Astrocyte of the cerebellum (primary cell): ENCODE measurements at regions of chr4 and their contacts with region 1.

Region 1: DNA sequence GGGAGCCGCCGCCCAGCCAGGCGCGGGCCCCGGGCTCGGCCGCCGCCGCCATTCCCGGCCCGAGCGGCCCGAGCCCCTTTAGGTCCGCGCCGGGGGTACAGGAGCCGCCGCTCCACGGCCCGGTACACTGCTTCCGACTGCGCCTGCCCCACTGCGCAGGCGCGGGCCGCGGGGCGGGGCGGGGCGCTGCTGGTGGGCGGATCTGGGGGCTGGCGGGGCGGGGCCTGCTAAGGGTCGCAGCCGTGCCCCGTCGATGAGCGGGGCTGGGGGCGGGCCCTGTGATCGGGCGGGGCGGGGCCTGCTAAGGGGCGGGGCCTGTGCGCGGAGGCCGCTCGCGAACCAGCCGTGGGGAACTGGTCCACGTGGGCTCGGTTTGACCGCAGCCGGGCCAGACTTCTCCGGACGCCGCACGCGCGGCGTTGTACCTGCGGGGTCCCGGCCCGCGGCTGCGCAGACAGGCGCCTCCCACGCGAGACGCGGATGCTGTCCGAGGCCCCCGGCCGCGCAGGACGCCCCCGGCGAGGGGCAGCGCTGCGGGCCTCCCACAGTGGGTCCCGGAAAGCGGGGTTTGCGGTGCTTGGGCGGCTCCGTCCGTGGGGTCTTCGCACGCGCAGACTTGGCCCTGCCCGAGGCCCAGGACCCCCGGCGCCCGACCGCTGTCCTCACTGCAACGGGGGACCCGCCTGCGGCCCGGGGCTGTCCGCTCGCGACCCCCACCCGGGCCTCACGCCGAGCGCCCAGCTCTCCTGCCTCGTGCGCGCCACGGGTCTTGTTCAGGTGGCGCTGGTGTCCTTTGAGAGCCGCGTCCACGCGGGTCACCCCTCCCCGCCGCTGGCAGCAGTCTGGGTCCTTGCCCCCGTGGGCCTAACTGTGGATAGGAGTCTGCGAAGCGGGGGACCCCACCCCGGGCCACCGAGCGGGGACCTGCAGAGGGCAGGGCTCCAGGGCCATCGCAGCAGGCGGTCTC is at the start of gene DGKQ:
- DNase-seq: peak; percentile 24
- H3K4me3 ChIP-seq: peak within 1 kb of the TSS; percentile 67
- CTCF ChIP-seq: no peak

Region 2: GRCh38 chr4:915595-915994 is 58.1 kb before region 1 on chr4:
- in situ Hi-C with region 1: no loop called
- DNase-seq: no peak
- H3K4me3 ChIP-seq: no peak overlapping the region
- CTCF ChIP-seq: no peak

Region 3: GRCh38 chr4:931960-932712 is 41.6 kb before region 1 on chr4 and contains the starts of genes GAK and TMEM175:
- in situ Hi-C with region 1: loop called (anchors 5 kb)
- DNase-seq: peak; percentile 83
- H3K4me3 ChIP-seq: peak within 1 kb of the TSS; percentile 99
- CTCF ChIP-seq: peak; percentile 10

Region 4: DNA sequence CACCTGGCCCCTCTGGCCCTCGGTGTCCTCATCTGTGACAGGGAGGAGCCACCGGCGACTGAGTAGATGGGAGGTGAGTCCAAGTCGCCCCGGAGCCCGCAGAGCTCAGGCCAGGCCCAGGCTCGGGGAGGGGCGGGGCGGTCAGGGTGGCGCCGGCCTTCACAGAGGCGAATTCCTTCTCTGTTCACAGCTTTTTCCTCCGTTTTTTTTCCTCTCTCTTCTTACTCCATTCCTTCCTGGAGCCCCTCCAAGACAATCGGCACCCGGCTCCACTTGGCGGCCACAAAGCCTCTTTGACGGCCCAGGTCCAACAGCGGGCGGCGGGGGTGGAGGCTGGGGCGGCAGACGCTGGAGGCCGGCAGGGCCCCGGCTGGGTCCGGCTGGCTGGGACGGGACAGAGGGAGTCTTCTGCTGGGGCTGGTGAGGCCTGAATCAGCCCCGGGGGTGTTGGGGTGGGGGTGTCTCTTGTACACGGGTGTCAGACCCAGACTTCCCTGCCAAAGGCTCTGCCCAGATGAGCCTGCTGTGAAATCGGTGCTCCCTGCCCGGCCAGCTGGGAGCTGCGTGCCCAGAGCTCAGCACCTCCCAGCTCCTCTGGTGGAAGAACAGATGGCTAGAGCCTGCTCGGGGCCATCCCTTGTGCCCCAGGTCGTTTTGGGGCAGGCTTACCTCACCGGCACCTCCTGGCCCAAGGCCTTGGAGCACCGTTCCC is 60.3 kb after region 1 on chr4:
- in situ Hi-C with region 1: loop called (anchors 5 kb)
- DNase-seq: peak; percentile 66
- H3K4me3 ChIP-seq: peak overlapping the region; percentile 24
- CTCF ChIP-seq: no peak

Region 5: DNA sequence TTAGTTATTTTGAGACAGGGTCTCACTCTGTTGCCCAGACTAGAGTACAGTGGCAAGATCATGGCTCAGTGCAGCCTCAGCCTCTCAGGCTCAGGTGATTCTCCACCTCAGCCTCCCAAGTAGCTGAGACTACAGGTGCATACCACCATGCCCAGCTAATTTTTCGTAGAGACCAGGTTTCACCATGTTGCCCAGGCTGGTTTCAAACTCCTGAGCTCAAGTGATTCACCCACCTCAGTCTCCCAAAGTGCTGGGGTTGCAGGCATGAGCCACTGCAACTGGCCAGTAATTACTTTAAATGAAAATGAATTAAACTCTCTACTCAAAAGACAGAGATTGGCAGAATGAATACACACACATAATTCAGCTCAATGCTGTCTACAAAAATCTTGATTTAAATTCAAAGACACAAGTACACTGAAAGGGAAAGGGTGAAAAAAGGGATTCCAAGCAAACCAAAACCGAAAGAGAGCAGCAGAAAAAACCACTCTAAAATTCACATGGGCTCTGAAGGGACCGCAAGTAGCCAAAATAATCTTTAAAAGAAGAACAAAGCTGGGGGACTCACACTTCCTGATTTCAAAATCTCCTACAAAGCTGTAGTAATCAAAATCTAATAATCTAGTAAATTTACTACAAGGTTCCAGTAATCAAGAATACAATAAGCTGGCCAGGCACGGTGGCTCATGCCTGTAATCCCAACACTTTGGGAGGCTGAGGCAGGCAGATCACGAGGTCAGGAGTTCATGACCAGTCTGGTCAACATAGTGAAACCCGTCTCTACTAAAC is 210.5 kb after region 1 on chr4:
- in situ Hi-C with region 1: no loop called
- DNase-seq: no peak
- H3K4me3 ChIP-seq: no peak overlapping the region
- CTCF ChIP-seq: no peak

Region 6: DNA sequence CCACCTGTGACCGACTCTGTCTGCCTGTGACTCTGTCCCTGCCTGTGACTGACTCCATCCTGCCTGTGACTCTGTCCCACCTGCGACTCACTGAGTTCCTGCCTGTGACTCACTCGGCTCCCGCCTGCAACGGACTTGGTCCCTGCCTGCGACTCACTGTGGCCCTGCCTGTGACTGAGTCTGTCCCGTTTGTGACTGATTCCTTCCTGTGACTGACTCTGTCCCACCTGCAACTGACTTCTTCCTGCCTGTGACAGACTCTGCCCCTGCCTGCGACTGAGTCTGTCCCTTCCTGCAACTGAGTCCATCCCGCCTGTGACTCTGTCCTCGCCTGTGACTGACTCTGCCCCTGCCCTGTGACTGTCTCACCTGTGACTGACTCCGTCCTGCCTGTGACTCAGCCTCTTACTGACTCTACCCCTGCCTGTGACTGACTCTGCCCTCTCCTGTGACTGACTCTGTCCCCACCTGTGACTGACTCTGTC is 363.7 kb after region 1 on chr4:
- in situ Hi-C with region 1: no loop called
- DNase-seq: no peak
- H3K4me3 ChIP-seq: no peak overlapping the region
- CTCF ChIP-seq: no peak